ENCODE measurements at regions of chr12 and their contacts with region 1.

Region 1: DNA sequence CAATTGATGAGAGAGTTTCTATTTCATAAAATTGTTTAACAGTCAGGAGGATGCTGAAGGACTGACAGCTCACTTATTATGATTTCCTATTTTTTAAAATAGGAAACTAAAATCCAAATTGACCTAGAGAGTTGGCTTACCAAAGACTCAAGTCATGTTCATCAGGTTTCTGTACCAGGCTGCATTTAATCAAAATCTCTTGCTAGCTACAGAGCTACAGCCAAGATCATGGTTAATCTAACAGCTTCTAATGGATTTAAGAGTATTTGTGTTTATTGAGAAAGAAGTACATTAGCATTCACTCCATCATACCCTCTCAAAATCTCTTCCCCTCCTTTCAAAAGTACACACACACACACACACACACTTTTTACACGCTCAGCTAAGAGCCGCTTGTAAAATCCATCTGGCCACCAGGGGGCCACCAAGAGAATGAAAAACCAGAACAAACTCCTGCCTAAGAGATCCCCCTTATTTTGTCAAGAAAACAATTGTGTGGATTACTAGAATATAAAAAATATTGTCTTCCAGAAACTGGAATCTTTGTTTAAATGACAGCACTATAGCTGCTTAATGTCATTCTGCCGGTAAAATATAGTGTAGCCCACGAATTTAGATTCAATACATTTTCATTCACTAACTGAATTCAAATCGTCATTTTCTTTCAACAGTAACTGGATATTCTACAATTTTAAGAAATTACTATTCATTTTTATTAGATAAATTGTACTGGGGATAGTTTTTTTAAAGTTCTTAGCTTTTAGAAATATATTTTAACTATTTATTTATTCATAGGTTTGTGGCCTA is 334.0 kb downstream of the BTG1 start:
- DNase-seq: peak; percentile 70

Region 2: GRCh38 chr12:91630596-91631293 is 180.9 kb before region 1 on chr12:
- in situ Hi-C with region 1: no loop called
- DNase-seq: no peak

Region 3: GRCh38 chr12:92570056-92570753 is 758.5 kb after region 1 on chr12:
- in situ Hi-C with region 1: loop called (anchors 25 kb)
- DNase-seq: peak; percentile 78

Measured in KBM-7 (cell line).